PC-3 (cell line): ENCODE measurements at regions of chr1 and their contacts with region 1.

Region 1: DNA sequence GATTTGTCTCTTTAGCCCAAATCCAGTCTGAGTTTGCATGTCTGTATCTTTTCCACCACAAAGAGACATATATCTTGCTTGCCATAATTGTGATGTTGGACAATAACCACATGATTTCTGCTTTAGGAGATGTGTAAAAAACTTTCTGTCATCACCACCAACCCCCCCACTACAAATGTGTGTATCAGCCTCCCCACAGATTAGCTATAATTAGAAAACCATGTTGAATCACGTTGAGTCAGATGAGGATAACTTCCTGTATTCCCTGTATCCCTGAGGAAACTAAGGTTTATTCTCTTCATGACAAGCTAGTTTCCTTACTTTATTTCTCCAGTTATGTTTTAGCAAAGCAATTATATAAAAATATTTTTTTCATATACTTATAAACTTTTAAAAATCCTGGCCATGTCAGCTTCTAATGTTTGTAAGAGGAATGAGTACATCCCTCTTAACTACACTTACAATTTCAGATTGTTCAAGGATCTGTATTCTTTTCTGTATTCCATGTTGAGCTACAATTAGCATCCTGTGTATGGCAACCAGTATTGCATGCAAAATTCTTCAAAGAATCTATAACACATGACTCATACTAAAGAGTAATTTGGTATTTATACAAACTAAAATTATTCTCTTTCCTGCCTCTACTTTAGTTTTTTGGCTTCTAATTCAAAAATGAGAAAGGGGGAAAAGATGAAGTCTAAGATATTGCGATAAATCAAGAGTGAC is 143.0 kb downstream of the FMN2 start:
- DNase-seq: peak; percentile 73
- ATAC-seq: peak; percentile 50
- H3K4me3 ChIP-seq: no peak overlapping the region
- H3K27ac ChIP-seq: peak overlapping the region; percentile 77
- H3K4me1 ChIP-seq: peaks cover 44% of the 10 kb centered on the region
- H3K27me3 ChIP-seq: no peaks in the 10 kb centered on the region
- CTCF ChIP-seq: no peak

Region 2: GRCh38 chr1:240258910-240259309 is 24.3 kb after region 1 on chr1:
- CTCF ChIA-PET with region 1: no interaction called
- POLR2A ChIA-PET with region 1: no interaction called
- intact Hi-C with region 1: loop called (anchors 1 kb)
- DNase-seq: peak; percentile 79
- ATAC-seq: peak; percentile 97
- H3K4me3 ChIP-seq: no peak overlapping the region
- H3K27ac ChIP-seq: peak overlapping the region; percentile 50
- H3K4me1 ChIP-seq: peaks cover 16% of the 10 kb centered on the region
- H3K27me3 ChIP-seq: no peaks in the 10 kb centered on the region
- CTCF ChIP-seq: no peak

Region 3: DNA sequence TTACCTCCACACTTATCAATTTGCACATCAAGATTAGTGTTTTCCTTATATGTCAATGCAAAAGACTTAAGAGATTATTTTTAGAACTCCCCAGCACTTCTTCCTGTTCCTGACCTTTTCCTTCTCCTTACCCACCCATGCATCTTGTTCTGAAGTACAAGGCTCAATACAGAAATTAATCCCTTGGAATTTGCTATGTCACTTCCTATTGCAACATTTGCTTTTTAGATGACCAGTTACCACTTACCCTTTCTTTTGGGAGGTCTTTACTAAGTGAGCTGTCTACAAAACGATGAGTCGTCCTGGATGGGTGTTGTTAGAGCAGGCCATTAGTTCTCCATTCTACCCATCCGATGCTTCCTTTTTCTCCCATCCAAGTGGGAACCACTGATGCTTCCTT is 78.2 kb after region 1 on chr1:
- CTCF ChIA-PET with region 1: no interaction called
- POLR2A ChIA-PET with region 1: interaction called, 5 read pairs
- intact Hi-C with region 1: loop called (anchors 2 kb)
- DNase-seq: peak; percentile 80
- ATAC-seq: peak; percentile 35; the same call in 1 of the 2 replicates
- H3K4me3 ChIP-seq: no peak overlapping the region
- H3K27ac ChIP-seq: peak overlapping the region; percentile 36
- H3K4me1 ChIP-seq: peaks cover 33% of the 10 kb centered on the region
- H3K27me3 ChIP-seq: no peaks in the 10 kb centered on the region
- CTCF ChIP-seq: no peak

Region 4: DNA sequence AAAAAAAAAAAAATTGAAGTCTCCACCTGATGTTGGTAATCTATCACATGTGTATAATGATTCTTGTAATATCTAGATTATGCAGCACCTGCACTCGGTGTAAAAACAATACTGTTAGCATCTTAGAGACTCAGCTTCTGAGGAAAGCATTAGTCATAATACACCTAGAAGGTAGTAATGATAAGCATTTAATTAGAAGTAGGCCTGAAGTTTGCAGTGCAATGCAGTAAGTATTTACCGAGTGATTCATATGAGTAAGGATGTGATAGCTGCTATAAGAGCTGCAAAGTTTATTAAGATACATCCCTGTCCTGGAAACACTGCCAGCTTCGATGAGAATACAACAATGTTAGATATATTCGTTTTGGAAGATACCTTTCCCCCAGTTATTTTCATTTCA is 180.9 kb after region 1 on chr1:
- CTCF ChIA-PET with region 1: no interaction called
- POLR2A ChIA-PET with region 1: no interaction called
- intact Hi-C with region 1: loop called (anchors 2 kb)
- DNase-seq: peak; percentile 85
- ATAC-seq: peak; percentile 99
- H3K4me3 ChIP-seq: peak overlapping the region; percentile 35; the same call in 1 of the 2 replicates
- H3K27ac ChIP-seq: peak overlapping the region; percentile 57
- H3K4me1 ChIP-seq: peaks cover 25% of the 10 kb centered on the region
- H3K27me3 ChIP-seq: no peaks in the 10 kb centered on the region
- CTCF ChIP-seq: no peak

Region 5: GRCh38 chr1:240435968-240436566 is 201.4 kb after region 1 on chr1:
- CTCF ChIA-PET with region 1: no interaction called
- POLR2A ChIA-PET with region 1: interaction called, 18 read pairs
- intact Hi-C with region 1: no loop called
- DNase-seq: peak; percentile 74
- ATAC-seq: peak; percentile 98
- H3K4me3 ChIP-seq: no peak overlapping the region
- H3K27ac ChIP-seq: no peak overlapping the region
- H3K4me1 ChIP-seq: peaks cover 12% of the 10 kb centered on the region
- H3K27me3 ChIP-seq: no peaks in the 10 kb centered on the region
- CTCF ChIP-seq: no peak

Region 6: GRCh38 chr1:240474133-240474614 is 239.5 kb after region 1 on chr1:
- CTCF ChIA-PET with region 1: no interaction called
- POLR2A ChIA-PET with region 1: no interaction called
- intact Hi-C with region 1: no loop called
- DNase-seq: no peak
- ATAC-seq: no peak
- H3K4me3 ChIP-seq: no peak overlapping the region
- H3K27ac ChIP-seq: no peak overlapping the region
- H3K4me1 ChIP-seq: no peaks in the 10 kb centered on the region
- H3K27me3 ChIP-seq: no peaks in the 10 kb centered on the region
- CTCF ChIP-seq: no peak